Endothelial cell of umbilical vein (primary cell): ENCODE measurements at regions of chr4 and their contacts with region 1.

Region 1: GRCh38 chr4:107885865-107886264 is 45.5 kb upstream of the CYP2U1 start:
- DNase-seq: peak; percentile 46
- H3K4me3 ChIP-seq: no peak overlapping the region
- H3K27ac ChIP-seq: peak overlapping the region; percentile 23
- H3K4me1 ChIP-seq: peaks cover 8% of the 10 kb centered on the region
- H3K27me3 ChIP-seq: no peaks in the 10 kb centered on the region
- CTCF ChIP-seq: no peak
- POLR2A ChIP-seq: no peak

Region 2: DNA sequence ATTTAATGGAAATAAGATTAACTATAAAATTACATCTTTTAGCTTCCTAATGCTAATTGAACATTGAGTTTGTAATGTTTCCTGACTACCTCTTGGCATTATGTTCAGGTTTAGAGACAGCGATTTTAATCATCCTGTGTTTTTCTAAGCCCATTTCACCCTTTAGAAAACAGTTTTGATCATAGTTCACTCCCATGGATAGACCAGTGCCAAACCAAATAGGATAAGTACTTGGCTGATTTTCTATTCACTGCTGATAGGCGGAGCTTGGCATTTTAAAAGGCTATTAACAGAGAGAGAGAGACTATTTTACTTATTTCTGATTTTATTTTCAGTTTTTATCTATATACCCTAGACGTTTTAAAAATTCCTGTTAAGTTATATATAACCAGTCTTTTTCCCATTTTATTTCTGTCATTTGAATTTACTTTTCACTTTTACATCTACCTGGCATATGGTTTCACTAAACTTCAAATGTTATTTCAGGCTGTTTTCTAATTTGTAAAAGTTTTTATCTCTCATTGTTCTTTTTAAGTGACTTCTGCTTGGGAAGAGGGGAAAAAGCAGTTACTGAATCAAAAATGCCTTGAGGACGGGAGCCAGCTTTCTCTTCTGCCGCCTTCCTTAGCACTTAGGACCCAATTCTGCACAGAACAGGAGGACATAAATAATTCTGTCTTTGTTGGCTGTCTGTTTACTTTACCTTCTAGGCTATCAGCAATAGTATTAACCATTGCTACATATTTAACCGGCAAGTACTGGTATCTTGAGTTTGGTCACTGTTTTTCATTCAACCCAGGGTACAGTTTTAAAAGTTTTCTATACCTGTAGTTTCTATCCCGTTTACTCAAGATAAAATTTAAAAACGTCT is 14.7 kb before region 1 on chr4:
- CTCF ChIA-PET with region 1: interaction called, 10 read pairs
- POLR2A ChIA-PET with region 1: no interaction called
- dilution Hi-C with region 1: no loop called
- intact Hi-C with region 1: loop called (anchors 2 kb)
- DNase-seq: peak; percentile 74
- H3K4me3 ChIP-seq: peak overlapping the region in 2 of 3 experiments; percentile 16 to 25
- H3K27ac ChIP-seq: peak overlapping the region; percentile 32
- H3K4me1 ChIP-seq: peaks cover 32% of the 10 kb centered on the region
- H3K27me3 ChIP-seq: no peaks in the 10 kb centered on the region
- CTCF ChIP-seq: no peak
- POLR2A ChIP-seq: no peak